ENCODE measurements at regions of chr20 and their contacts with region 1.

Region 1: GRCh38 chr20:33443512-33444239 is at the start of gene SNTA1:
- DNase-seq: peak; percentile 96
- H3K4me3 ChIP-seq: peak within 1 kb of the TSS; percentile 76
- H3K27ac ChIP-seq: peak within 1 kb of the TSS; percentile 95
- H3K4me1 ChIP-seq: peaks cover 69% of the 10 kb centered on the region
- CTCF ChIP-seq: no peak
- total RNA-seq, gene SNTA1: 44.8 and 46.5 TPM in 2 replicates

Region 2: GRCh38 chr20:33401184-33401920 is 42.3 kb before region 1 on chr20 and contains the start of gene CDK5RAP1:
- CTCF ChIA-PET with region 1: interaction called, 5 read pairs
- POLR2A ChIA-PET with region 1: interaction called, 5 read pairs
- intact Hi-C with region 1: loop called (anchors 1 kb)
- DNase-seq: peak; percentile 96
- H3K4me3 ChIP-seq: peak within 1 kb of the TSS; percentile 94
- H3K27ac ChIP-seq: peak within 1 kb of the TSS; percentile 65
- H3K4me1 ChIP-seq: peaks cover 32% of the 10 kb centered on the region
- CTCF ChIP-seq: 0 out of 2 replicates have a peak, but pooled peaks have one; percentile 8
- total RNA-seq, gene CDK5RAP1: 32.1 and 41.2 TPM in 2 replicates

Region 3: DNA sequence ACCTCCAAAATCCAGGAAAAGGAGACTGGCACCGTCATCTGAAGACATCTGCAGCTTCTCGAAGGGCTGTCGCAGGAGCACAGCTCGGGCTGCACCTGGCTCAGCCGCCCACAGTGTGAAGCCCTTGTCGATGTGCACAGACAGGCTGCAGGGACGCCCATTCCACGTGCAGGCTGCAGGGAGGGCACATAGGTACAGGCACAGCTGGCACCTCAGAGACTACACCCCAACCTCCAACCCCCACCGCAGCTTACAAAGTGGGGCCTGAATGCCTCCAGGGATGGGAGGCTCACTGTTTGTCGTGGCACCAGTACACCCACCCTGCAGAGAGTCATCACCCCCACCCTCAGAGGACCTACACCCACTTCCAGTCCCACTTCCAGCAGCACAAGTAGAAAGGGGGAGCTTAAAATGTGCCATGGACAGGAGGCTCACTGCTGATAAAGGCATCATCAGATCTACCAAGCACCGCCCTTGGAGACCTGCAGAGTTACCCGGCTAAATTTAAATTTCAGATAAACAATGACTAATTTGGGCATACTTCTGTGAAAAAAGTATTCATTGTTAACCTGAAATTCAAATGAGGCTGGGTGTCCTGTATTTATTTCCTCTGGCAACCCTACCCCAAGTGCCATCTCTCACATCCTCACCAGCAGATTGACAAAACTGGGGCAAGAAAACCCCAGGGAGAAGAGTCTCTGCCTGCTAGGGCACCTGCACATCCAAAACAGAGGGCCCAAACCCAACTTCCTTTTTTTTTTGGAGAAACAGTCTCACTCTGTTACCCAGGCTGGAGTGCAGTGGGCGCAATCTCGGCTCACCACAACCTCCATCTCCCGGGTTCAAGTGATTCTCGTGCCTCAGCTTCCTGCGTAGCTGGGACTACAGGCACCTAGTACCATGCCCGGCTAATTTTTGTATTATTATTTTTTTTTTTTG is 34.7 kb before region 1 on chr20:
- CTCF ChIA-PET with region 1: interaction called, 4 read pairs
- POLR2A ChIA-PET with region 1: interaction called, 7 read pairs
- intact Hi-C with region 1: loop called (anchors 2 kb)
- DNase-seq: peak; percentile 89
- H3K4me3 ChIP-seq: peak overlapping the region; percentile 60
- H3K27ac ChIP-seq: peak overlapping the region; percentile 94
- H3K4me1 ChIP-seq: peaks cover 50% of the 10 kb centered on the region
- CTCF ChIP-seq: no peak

Region 4: DNA sequence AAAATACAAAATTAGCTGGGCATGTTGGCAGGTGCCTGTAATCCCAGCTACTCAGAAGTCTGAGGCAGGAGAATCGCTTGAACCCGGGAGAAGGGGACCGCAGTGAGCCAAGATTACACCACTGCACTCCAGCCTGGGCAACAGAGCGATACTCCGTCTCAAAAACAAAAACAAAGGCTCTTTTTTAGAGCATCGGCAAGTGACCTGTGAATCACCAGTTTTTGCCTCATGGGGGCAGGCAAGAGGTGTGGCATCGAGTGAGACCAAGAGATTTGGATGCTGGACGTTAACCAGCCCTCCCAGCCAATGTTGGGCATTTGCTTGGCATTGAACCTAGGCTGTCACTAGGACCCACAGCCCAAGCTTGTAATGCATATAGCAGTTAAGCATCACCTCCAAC is 27.7 kb before region 1 on chr20:
- CTCF ChIA-PET with region 1: interaction called, 4 read pairs
- POLR2A ChIA-PET with region 1: interaction called, 3 read pairs
- intact Hi-C with region 1: loop called (anchors 2 kb)
- DNase-seq: peak; percentile 62
- H3K4me3 ChIP-seq: no peak overlapping the region
- H3K27ac ChIP-seq: no peak overlapping the region
- H3K4me1 ChIP-seq: peaks cover 15% of the 10 kb centered on the region
- CTCF ChIP-seq: peak; percentile 73